ENCODE measurements at regions of chr17 and their contacts with region 1.

Region 1: DNA sequence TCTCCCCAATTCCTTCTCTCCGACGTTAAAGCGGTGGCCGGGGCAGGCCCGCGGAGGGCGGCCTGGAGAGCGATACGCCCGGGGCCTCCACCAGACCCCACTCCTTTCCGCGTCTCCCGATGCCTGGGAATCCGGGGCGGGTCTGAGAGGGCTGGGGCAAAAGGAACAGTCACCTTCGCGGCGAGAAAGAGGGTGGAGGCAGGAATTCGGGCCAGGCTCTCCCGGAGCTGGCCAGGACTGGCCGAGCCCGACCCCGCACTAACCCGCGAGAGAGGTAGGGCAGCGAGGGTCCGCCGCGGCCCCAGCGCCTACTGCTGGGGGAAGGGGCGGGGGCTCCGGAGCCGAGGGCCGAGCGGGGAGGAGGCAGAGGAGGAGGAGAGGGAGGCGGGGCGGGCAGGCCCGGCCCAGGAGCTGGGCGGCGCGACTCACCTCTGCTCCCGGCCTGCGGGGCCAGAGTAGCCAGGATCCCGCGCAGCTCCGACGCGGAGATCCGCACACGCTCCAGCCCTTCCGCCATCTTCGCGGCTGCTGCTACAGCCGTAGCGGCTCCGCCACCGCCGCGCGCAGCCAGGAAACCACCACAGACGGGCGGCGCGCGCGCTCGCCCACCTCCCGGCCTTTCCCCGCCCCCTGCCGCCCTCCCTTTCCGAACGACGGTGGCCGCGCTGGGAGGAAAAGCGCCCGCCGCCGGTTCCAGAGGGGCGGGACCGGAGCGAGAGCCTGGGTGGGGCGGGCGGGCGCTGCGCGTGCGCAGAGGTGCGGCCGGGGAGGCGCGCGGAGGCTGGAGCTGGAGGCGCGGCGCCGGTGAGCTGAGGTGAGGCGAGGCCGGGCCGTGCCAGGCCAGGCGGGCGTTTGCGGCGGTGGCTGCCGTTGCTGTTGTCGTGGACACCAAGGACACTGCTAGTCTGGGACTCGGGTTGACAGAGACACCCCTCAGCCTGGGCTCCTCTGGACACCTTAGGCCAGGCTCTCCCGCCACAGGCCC is at the starts of genes SMG6 and SRR:
- DNase-seq: peak; percentile 53 to 95
- H3K4me3 ChIP-seq: peak within 1 kb of the TSS; percentile 83 to 99
- H3K27ac ChIP-seq: peak within 1 kb of the TSS; percentile 84 to 87
- H3K4me1 ChIP-seq: peaks cover 0 to 18% of the 10 kb centered on the region in 2 donors
- H3K27me3 ChIP-seq: no peaks in the 10 kb centered on the region
- CTCF ChIP-seq: no peak
- total RNA-seq, gene SMG6: 50.8 TPM
- total RNA-seq, gene SRR: not detected

Region 2: GRCh38 chr17:1604831-1605528 is 698.5 kb before region 1 on chr17:
- intact Hi-C with region 1: no loop called
- DNase-seq: no peak
- H3K4me3 ChIP-seq: no peak overlapping the region
- H3K27ac ChIP-seq: no peak overlapping the region
- H3K4me1 ChIP-seq: no peaks in the 10 kb centered on the region
- H3K27me3 ChIP-seq: no peaks in the 10 kb centered on the region
- CTCF ChIP-seq: no peak

Region 3: GRCh38 chr17:2336215-2336851 is 32.8 kb after region 1 on chr17 and contains the start of gene TSR1:
- intact Hi-C with region 1: loop called (anchors 5 kb)
- DNase-seq: peak; percentile 57 to 92
- H3K4me3 ChIP-seq: peak within 1 kb of the TSS; percentile 95 to 98
- H3K27ac ChIP-seq: peak within 1 kb of the TSS; percentile 86 to 89
- H3K4me1 ChIP-seq: peaks cover 11 to 13% of the 10 kb centered on the region in 2 donors
- H3K27me3 ChIP-seq: no peaks in the 10 kb centered on the region
- CTCF ChIP-seq: peak in 1 of 3 experiments; percentile 33
- total RNA-seq, gene TSR1: 16.9 TPM

Region 4: GRCh38 chr17:2347547-2348307 is 44.2 kb after region 1 on chr17:
- intact Hi-C with region 1: no loop called
- DNase-seq: no peak
- H3K4me3 ChIP-seq: no peak overlapping the region
- H3K27ac ChIP-seq: no peak overlapping the region
- H3K4me1 ChIP-seq: no peaks in the 10 kb centered on the region
- H3K27me3 ChIP-seq: no peaks in the 10 kb centered on the region
- CTCF ChIP-seq: no peak

Measured in ascending aorta (tissue), 2 donors.